Transverse colon (tissue), 4 donors: ENCODE measurements at regions of chr18 and their contacts with region 1.

Region 1: GRCh38 chr18:47461406-47461948 is 210.0 kb upstream of the SKOR2 start:
- DNase-seq: no peak
- H3K4me3 ChIP-seq: no peak overlapping the region
- H3K27ac ChIP-seq: no peak overlapping the region
- H3K4me1 ChIP-seq: peaks cover 0 to 11% (median 4%) of the 10 kb centered on the region in 4 donors
- H3K27me3 ChIP-seq: no peaks in the 10 kb centered on the region
- CTCF ChIP-seq: no peak
- EP300 ChIP-seq: no peak
- POLR2A ChIP-seq: no peak

Region 2: GRCh38 chr18:47558110-47558750 is 96.8 kb after region 1 on chr18:
- in situ Hi-C with region 1: no loop called
- intact Hi-C with region 1: no loop called
- DNase-seq: no peak
- H3K4me3 ChIP-seq: no peak overlapping the region
- H3K27ac ChIP-seq: no peak overlapping the region
- H3K4me1 ChIP-seq: no peaks in the 10 kb centered on the region
- H3K27me3 ChIP-seq: no peaks in the 10 kb centered on the region
- CTCF ChIP-seq: no peak
- EP300 ChIP-seq: no peak
- POLR2A ChIP-seq: no peak

Region 3: DNA sequence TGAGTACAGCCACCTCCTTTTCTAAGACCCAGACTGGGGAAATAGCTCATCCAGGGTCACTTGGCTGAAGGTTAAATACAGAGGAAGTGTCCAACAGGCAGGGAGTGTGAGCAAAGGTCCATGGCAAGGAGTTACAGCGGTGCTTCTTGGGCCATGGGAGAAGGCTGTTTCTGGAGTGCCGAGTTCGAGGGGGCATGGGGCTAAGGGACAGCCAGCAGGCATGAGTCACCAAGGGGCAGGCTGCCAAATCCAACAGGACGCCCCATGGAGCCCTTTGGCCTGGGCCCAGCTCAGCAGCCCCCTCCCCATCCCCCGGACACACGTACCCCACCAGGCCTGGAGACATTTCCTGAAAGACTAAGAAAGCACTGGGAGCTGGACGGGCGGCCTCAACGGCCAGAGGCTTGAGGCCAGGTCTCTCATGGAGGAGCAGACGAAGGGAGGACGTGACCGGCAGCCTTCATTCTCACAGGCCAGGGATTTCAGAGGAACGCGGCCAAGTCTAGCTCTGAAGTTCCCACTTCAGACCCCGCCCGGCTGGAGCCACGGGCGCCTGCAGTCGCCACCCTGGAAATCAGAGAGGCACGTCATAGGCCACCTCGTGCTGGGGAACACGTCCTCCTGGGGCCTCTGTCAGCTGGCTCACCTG is 1328.9 kb after region 1 on chr18:
- in situ Hi-C with region 1: no loop called
- intact Hi-C with region 1: loop called (anchors 5 kb)
- DNase-seq: no peak
- H3K4me3 ChIP-seq: no peak overlapping the region
- H3K27ac ChIP-seq: peak overlapping the region in 3 of 4 donors; percentile 4 to 10 (median 10)
- H3K4me1 ChIP-seq: peaks cover 0 to 9% (median 1%) of the 10 kb centered on the region in 4 donors
- H3K27me3 ChIP-seq: no peaks in the 10 kb centered on the region
- CTCF ChIP-seq: no peak
- EP300 ChIP-seq: no peak
- POLR2A ChIP-seq: no peak